Mammary epithelial cell (primary cell): ENCODE measurements at regions of chr11 and their contacts with region 1.

Region 1: GRCh38 chr11:64304316-64305072 is 830 bp upstream of the ESRRA start:
- DNase-seq: peak; percentile 81
- H3K4me3 ChIP-seq: peak overlapping the region; percentile 32 to 63 (median 45)
- H3K27ac ChIP-seq: peak overlapping the region; percentile 46
- H3K4me1 ChIP-seq: peaks cover 34% of the 10 kb centered on the region
- H3K27me3 ChIP-seq: peaks cover 4% of the 10 kb centered on the region
- CTCF ChIP-seq: peak; percentile 79 to 88

Region 2: GRCh38 chr11:63974259-63975143 is 330.0 kb before region 1 on chr11 and contains the start of gene COX8A:
- CTCF ChIA-PET with region 1: interaction called, 18 read pairs
- dilution Hi-C with region 1: no loop called
- in situ Hi-C with region 1: no loop called
- intact Hi-C with region 1: no loop called
- DNase-seq: peak; percentile 100
- H3K4me3 ChIP-seq: peak within 1 kb of the TSS; percentile 88 to 100 (median 100)
- H3K27ac ChIP-seq: peak within 1 kb of the TSS; percentile 87
- H3K4me1 ChIP-seq: peaks cover 10% of the 10 kb centered on the region
- H3K27me3 ChIP-seq: no peaks in the 10 kb centered on the region
- CTCF ChIP-seq: peak in 1 of 2 donors; percentile 28
- total RNA-seq, gene COX8A: 185 to 338 TPM

Region 3: GRCh38 chr11:64185816-64186498 is 118.5 kb before region 1 on chr11 and contains the start of gene STIP1:
- CTCF ChIA-PET with region 1: interaction called, 4 read pairs
- dilution Hi-C with region 1: no loop called
- in situ Hi-C with region 1: loop called in 1 of 2 experiments (anchors 5 kb)
- intact Hi-C with region 1: loop called (anchors 5 kb)
- DNase-seq: peak; percentile 100
- H3K4me3 ChIP-seq: peak within 1 kb of the TSS; percentile 45 to 72 (median 72)
- H3K27ac ChIP-seq: peak within 1 kb of the TSS; percentile 55
- H3K4me1 ChIP-seq: peaks cover 14% of the 10 kb centered on the region
- H3K27me3 ChIP-seq: no peaks in the 10 kb centered on the region
- CTCF ChIP-seq: peak in 1 of 2 donors; percentile 64
- total RNA-seq, gene STIP1: 105 to 173 TPM

Region 4: GRCh38 chr11:64225612-64226506 is 78.6 kb before region 1 on chr11 and contains the starts of genes NUDT22 and TRPT1:
- CTCF ChIA-PET with region 1: interaction called, 13 read pairs
- dilution Hi-C with region 1: no loop called
- in situ Hi-C with region 1: no loop called
- intact Hi-C with region 1: no loop called
- DNase-seq: peak; percentile 75
- H3K4me3 ChIP-seq: peak within 1 kb of the TSS; percentile 60 to 94 (median 82)
- H3K27ac ChIP-seq: no peak within 1 kb of the TSS
- H3K4me1 ChIP-seq: peaks cover 51% of the 10 kb centered on the region
- H3K27me3 ChIP-seq: no peaks in the 10 kb centered on the region
- CTCF ChIP-seq: peak; percentile 17 to 55
- total RNA-seq, gene NUDT22: 52.5 to 64.7 TPM
- total RNA-seq, gene TRPT1: 21.5 to 36.0 TPM

Region 5: GRCh38 chr11:64269380-64270234 is 34.9 kb before region 1 on chr11:
- CTCF ChIA-PET with region 1: interaction called, 5 read pairs
- dilution Hi-C with region 1: loop called (anchors 5 kb)
- in situ Hi-C with region 1: no loop called
- intact Hi-C with region 1: loop called (anchors 1 kb)
- DNase-seq: peak; percentile 99
- H3K4me3 ChIP-seq: peak overlapping the region; percentile 57 to 70 (median 59)
- H3K27ac ChIP-seq: peak overlapping the region; percentile 62
- H3K4me1 ChIP-seq: peaks cover 41% of the 10 kb centered on the region
- H3K27me3 ChIP-seq: no peaks in the 10 kb centered on the region
- CTCF ChIP-seq: peak in 1 of 2 donors; percentile 24

Region 6: GRCh38 chr11:64341851-64342791 is 37.6 kb after region 1 on chr11:
- CTCF ChIA-PET with region 1: interaction called, 3 read pairs
- dilution Hi-C with region 1: no loop called
- in situ Hi-C with region 1: no loop called
- intact Hi-C with region 1: loop called (anchors 1 kb)
- DNase-seq: peak; percentile 91
- H3K4me3 ChIP-seq: peak overlapping the region; percentile 13 to 57 (median 26)
- H3K27ac ChIP-seq: peak overlapping the region; percentile 53
- H3K4me1 ChIP-seq: peaks cover 15% of the 10 kb centered on the region
- H3K27me3 ChIP-seq: no peaks in the 10 kb centered on the region
- CTCF ChIP-seq: peak; percentile 11 to 64

Region 7: GRCh38 chr11:64386306-64386702 is 81.8 kb after region 1 on chr11:
- CTCF ChIA-PET with region 1: no interaction called
- dilution Hi-C with region 1: loop called (anchors 5 kb)
- in situ Hi-C with region 1: no loop called
- intact Hi-C with region 1: no loop called
- DNase-seq: peak; percentile 83
- H3K4me3 ChIP-seq: no peak overlapping the region
- H3K27ac ChIP-seq: no peak overlapping the region
- H3K4me1 ChIP-seq: peaks cover 15% of the 10 kb centered on the region
- H3K27me3 ChIP-seq: peaks cover 2% of the 10 kb centered on the region
- CTCF ChIP-seq: no peak